ENCODE measurements at regions of chr3 and their contacts with region 1.

Region 1: GRCh38 chr3:39288300-39288808 is 8.5 kb upstream of the CX3CR1 start:
- DNase-seq: peak; percentile 72 to 88 (median 77)
- H3K4me3 ChIP-seq: no peak overlapping the region
- H3K27ac ChIP-seq: no peak overlapping the region
- H3K4me1 ChIP-seq: no peaks in the 10 kb centered on the region
- H3K27me3 ChIP-seq: no peaks in the 10 kb centered on the region
- CTCF ChIP-seq: peak; percentile 58 to 92 (median 85)
- POLR2A ChIP-seq: no peak

Region 2: GRCh38 chr3:39126532-39127071 is 161.8 kb before region 1 on chr3:
- intact Hi-C with region 1: loop called (anchors 5 to 10 kb)
- DNase-seq: peak in 4 of 7 donors; percentile 63 to 81 (median 64)
- H3K4me3 ChIP-seq: no peak overlapping the region
- H3K27ac ChIP-seq: no peak overlapping the region
- H3K4me1 ChIP-seq: no peaks in the 10 kb centered on the region
- H3K27me3 ChIP-seq: no peaks in the 10 kb centered on the region
- CTCF ChIP-seq: peak; percentile 24 to 70 (median 59)
- POLR2A ChIP-seq: no peak

Region 3: GRCh38 chr3:39189959-39190269 is 98.4 kb before region 1 on chr3:
- intact Hi-C with region 1: loop called (anchors 5 kb)
- DNase-seq: peak; percentile 68 to 89 (median 82)
- H3K4me3 ChIP-seq: no peak overlapping the region
- H3K27ac ChIP-seq: no peak overlapping the region
- H3K4me1 ChIP-seq: no peaks in the 10 kb centered on the region
- H3K27me3 ChIP-seq: no peaks in the 10 kb centered on the region
- CTCF ChIP-seq: peak; percentile 78 to 85 (median 82)
- POLR2A ChIP-seq: no peak

Region 4: DNA sequence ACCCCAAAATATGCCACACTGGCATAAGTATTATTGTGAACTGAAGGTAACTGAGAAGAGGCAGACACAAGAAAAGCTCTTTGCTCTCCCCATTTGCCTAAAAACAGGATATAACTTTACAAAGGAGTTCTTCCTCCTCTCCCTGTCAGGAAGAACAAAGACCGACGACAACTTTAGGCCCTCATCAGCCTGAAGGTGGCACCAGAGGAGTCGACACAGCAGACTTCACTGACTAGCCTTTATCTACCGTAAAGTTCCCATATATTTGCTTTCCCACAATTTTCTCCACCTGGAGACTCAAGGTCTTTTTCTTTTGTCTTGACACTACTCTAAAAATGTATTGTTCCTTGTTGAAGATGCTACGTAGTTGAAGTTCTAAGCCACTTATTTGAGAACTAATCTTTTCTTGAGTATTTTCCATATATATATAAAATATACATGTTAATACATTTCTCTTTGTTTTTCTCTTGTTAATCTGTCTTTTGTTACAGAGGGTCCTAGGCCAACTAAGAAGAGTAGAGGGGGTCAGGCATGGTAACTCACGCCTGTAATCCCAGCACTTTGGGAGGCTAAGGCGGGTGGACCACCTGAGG is 79.8 kb before region 1 on chr3:
- intact Hi-C with region 1: loop called (anchors 5 kb)
- DNase-seq: peak in 6 of 7 donors; percentile 53 to 80 (median 65)
- H3K4me3 ChIP-seq: no peak overlapping the region
- H3K27ac ChIP-seq: no peak overlapping the region
- H3K4me1 ChIP-seq: no peaks in the 10 kb centered on the region
- H3K27me3 ChIP-seq: no peaks in the 10 kb centered on the region
- CTCF ChIP-seq: peak; percentile 41 to 65 (median 58)
- POLR2A ChIP-seq: no peak

Region 5: DNA sequence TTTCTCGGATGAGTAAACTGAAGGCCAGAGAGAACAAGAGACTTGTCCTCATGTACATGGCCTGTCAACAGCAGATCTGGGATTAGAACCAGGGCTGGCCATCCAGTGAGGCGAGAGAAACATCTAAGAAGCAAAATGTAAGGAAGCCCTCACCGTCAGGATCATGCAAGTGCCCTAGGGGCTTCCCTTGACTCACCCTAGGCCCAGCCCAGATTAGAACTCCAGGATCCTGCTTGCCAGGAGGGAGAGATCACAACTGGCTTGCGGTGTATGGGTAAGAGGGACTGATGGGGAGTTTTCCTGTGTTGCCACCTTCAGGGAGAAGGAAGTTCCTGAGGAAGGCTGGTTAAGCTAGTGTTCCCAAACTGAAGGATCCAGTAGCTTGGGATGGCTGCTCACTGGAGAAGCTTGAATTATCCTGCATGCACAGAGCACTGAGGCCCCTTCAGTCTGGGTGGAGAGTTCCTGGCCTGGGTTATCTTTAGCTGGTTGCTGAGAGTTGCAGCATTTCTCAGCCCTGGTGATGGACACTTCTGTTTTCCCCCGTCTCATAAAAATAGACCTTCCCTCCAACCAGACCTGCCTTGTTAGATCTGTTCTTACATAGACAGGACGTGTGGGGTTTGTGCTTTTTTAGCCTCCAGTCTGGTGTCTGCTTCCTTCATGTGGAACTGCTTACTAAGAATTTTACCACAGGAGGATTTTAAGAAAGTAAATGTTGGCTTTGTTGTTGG is 67.8 kb before region 1 on chr3:
- intact Hi-C with region 1: no loop called
- DNase-seq: no peak
- H3K4me3 ChIP-seq: no peak overlapping the region
- H3K27ac ChIP-seq: no peak overlapping the region
- H3K4me1 ChIP-seq: no peaks in the 10 kb centered on the region
- H3K27me3 ChIP-seq: peaks cover 4% of the 10 kb centered on the region
- CTCF ChIP-seq: no peak
- POLR2A ChIP-seq: no peak

Region 6: DNA sequence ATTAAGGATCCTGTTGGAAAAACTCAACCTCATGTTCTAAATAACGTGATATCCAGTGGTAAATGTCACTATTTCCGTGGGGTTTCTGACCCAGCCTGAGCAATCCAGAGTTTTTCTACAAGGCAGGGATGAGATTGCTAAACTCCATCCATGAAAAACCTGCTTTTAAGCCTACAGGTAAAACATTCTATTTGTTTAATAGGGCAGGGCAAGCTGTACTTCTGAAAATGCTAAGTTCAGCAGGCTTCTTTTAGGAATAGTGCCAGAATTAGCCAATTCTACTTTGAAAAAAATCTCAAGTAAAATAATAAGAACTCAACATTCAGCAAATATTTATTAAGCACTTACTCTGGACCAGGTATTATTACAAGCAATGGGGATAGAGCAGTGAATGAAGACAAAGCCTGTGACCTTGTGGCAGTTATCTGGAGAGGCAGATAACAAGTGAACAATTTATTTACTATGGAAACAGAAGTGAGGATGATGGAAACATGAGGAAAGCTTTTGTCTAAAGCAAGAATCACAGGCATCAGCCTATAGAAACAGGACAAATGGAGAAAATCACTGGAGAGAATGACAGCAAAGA is 131.5 kb after region 1 on chr3:
- intact Hi-C with region 1: no loop called
- DNase-seq: no peak
- H3K4me3 ChIP-seq: no peak overlapping the region
- H3K27ac ChIP-seq: no peak overlapping the region
- H3K4me1 ChIP-seq: no peaks in the 10 kb centered on the region
- H3K27me3 ChIP-seq: no peaks in the 10 kb centered on the region
- CTCF ChIP-seq: no peak
- POLR2A ChIP-seq: no peak